Sciatic nerve (tissue), 2 donors: ENCODE measurements at regions of chr5 and their contacts with region 1.

Region 1: GRCh38 chr5:100017520-100018262 is 517.5 kb upstream of the FAM174A start:
- DNase-seq: no peak
- ATAC-seq: no peak

Region 2: GRCh38 chr5:101505891-101506564 is 1488.3 kb after region 1 on chr5:
- intact Hi-C with region 1: loop called (anchors 5 kb)
- DNase-seq: no peak
- ATAC-seq: peak; percentile 28